Naive thymus-derived CD4-positive, alpha-beta T cell (primary cell): ENCODE measurements at regions of chr7 and their contacts with region 1.

Region 1: DNA sequence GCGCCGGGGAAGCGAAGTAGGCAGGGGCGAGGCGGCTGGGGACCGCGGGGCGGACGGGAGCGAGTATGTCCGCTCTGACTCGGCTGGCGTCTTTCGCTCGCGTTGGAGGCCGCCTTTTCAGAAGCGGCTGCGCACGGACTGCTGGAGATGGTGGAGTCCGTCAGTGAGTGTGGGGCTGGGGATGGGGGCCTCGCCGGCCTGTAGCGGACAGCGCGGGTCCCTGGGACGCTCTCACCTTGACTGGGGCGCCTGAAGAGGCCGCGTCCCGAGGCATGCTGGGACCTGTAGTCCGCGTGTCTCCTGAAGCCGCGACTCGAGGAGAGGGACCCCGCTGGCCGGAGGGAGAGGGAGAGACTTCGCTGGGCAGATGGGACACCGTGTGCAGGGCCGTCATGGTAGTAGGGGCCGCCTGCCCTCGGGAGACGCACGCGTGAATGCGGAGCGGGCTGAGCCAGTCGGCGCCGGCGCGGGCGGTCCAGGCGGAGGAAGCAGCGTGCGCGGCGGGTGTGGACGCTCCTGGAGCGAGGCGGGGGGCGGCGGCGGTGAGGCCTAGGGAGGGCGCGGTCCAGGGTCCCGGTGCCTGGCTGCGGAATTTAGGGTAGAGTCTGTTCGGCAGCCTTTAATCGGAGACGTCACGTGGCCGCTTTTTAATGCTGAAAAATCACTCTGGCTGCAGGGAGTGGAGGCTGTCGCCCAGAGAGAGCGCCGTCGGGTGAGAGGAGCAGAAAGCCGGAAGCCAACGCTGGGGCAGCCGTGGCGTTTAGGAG is at the start of gene NDUFB2:
- DNase-seq: peak; percentile 72 to 92 (median 90)
- ATAC-seq: peak; percentile 92
- H3K4me3 ChIP-seq: peak within 1 kb of the TSS; percentile 99
- H3K4me3 Mint-ChIP-seq: peak within 1 kb of the TSS; percentile 87 to 100 (median 98)
- H3K27ac ChIP-seq: peak within 1 kb of the TSS; percentile 88
- H3K27ac Mint-ChIP-seq: peak within 1 kb of the TSS; percentile 92 to 99 (median 98)
- H3K4me1 ChIP-seq: peaks cover 12 to 16% of the 10 kb centered on the region in 2 donors
- H3K4me1 Mint-ChIP-seq: peaks cover 18 to 50% (median 40%) of the 10 kb centered on the region in 7 donors
- H3K27me3 ChIP-seq: no peaks in the 10 kb centered on the region
- H3K27me3 Mint-ChIP-seq: no peaks in the 10 kb centered on the region
- total RNA-seq, gene NDUFB2: 88.3 to 184 (median 94.0) TPM

Region 2: DNA sequence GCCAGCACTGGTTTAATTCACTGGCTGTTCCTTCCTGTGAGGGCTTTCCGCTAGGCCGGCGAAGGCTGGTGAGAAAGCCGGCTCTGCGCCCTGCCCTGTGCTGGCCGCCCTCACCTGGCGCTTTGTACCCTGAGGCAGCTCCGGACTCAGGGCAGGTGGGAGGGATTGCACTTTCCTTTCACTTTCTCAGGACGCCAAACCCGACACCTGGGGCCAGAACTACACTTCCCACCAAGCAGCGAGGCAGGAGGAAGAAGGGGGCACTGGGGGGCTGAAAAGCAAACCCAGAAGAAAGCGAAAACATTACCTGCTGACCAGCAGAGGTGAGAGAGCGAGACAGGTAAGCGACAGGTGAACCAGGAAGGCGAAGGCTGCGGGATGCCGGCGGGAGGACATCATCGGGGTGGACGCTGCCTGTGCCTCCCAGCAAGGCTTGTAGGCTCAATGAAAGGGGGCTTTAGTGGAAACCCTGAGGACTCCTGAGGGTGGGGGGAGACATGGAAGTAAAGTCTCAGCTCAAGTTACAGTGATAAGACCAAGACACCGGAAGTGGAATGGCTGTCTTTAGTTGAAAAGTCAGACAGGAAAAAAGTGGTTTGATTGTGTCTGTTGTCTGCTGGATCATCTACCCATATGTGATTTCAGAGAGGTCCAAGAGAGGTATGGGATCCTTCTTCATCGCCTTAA is 292.8 kb before region 1 on chr7 and contains the start of gene RAB19:
- CTCF ChIA-PET with region 1: no interaction called
- POLR2A ChIA-PET with region 1: no interaction called
- intact Hi-C with region 1: loop called in 1 of 2 experiments (anchors 10 kb)
- DNase-seq: peak; percentile 7 to 67 (median 56)
- ATAC-seq: peak; percentile 87
- H3K4me3 ChIP-seq: peak within 1 kb of the TSS; percentile 82
- H3K4me3 Mint-ChIP-seq: peak within 1 kb of the TSS; percentile 92 to 99 (median 97)
- H3K27ac ChIP-seq: peak within 1 kb of the TSS; percentile 87
- H3K27ac Mint-ChIP-seq: peak within 1 kb of the TSS; percentile 91 to 99 (median 96)
- H3K4me1 ChIP-seq: peaks cover 8 to 11% of the 10 kb centered on the region in 2 donors
- H3K4me1 Mint-ChIP-seq: peaks cover 13 to 42% (median 29%) of the 10 kb centered on the region in 7 donors
- H3K27me3 ChIP-seq: no peaks in the 10 kb centered on the region
- H3K27me3 Mint-ChIP-seq: peaks cover 0 to 3% (median 0%) of the 10 kb centered on the region in 5 donors
- total RNA-seq, gene RAB19: 1.8 to 13.3 (median 3.3) TPM

Region 3: GRCh38 chr7:140661121-140661520 is 35.7 kb before region 1 on chr7:
- CTCF ChIA-PET with region 1: no interaction called
- POLR2A ChIA-PET with region 1: no interaction called
- intact Hi-C with region 1: loop called in 1 of 2 experiments (anchors 5 kb)
- DNase-seq: no peak
- ATAC-seq: no peak
- H3K4me3 ChIP-seq: no peak overlapping the region
- H3K4me3 Mint-ChIP-seq: no peak overlapping the region
- H3K27ac ChIP-seq: no peak overlapping the region
- H3K27ac Mint-ChIP-seq: no peak overlapping the region
- H3K4me1 ChIP-seq: peaks cover 0 to 6% of the 10 kb centered on the region in 2 donors
- H3K4me1 Mint-ChIP-seq: peaks cover 0 to 12% (median 11%) of the 10 kb centered on the region in 7 donors
- H3K27me3 ChIP-seq: no peaks in the 10 kb centered on the region
- H3K27me3 Mint-ChIP-seq: peaks cover under 1 to 58% (median 5%) of the 10 kb centered on the region in 5 donors

Region 4: GRCh38 chr7:140673063-140673773 is 23.6 kb before region 1 on chr7:
- CTCF ChIA-PET with region 1: no interaction called
- POLR2A ChIA-PET with region 1: interaction called, 26 read pairs
- intact Hi-C with region 1: loop called (anchors 1 kb)
- DNase-seq: peak; percentile 56 to 78 (median 75)
- ATAC-seq: peak; percentile 82
- H3K4me3 ChIP-seq: peak overlapping the region; percentile 82
- H3K4me3 Mint-ChIP-seq: peak overlapping the region; percentile 81 to 94 (median 89)
- H3K27ac ChIP-seq: peak overlapping the region; percentile 91
- H3K27ac Mint-ChIP-seq: peak overlapping the region; percentile 68 to 97 (median 88)
- H3K4me1 ChIP-seq: peaks cover 11 to 14% of the 10 kb centered on the region in 2 donors
- H3K4me1 Mint-ChIP-seq: peaks cover 16 to 42% (median 37%) of the 10 kb centered on the region in 7 donors
- H3K27me3 ChIP-seq: no peaks in the 10 kb centered on the region
- H3K27me3 Mint-ChIP-seq: peaks cover 0 to 7% (median 0%) of the 10 kb centered on the region in 5 donors

Region 5: GRCh38 chr7:140726281-140726680 is 29.4 kb after region 1 on chr7:
- CTCF ChIA-PET with region 1: interaction called, 4 read pairs
- POLR2A ChIA-PET with region 1: interaction called, 21 read pairs
- intact Hi-C with region 1: loop called in 1 of 2 experiments (anchors 1 kb)
- DNase-seq: peak in 4 of 9 donors; percentile 11 to 31 (median 26)
- ATAC-seq: no peak
- H3K4me3 ChIP-seq: no peak overlapping the region
- H3K4me3 Mint-ChIP-seq: no peak overlapping the region
- H3K27ac ChIP-seq: no peak overlapping the region
- H3K27ac Mint-ChIP-seq: peak overlapping the region in 7 of 9 donors; percentile 36 to 76 (median 53)
- H3K4me1 ChIP-seq: peaks cover 0 to 18% of the 10 kb centered on the region in 2 donors
- H3K4me1 Mint-ChIP-seq: peaks cover 9 to 39% (median 29%) of the 10 kb centered on the region in 7 donors
- H3K27me3 ChIP-seq: no peaks in the 10 kb centered on the region
- H3K27me3 Mint-ChIP-seq: no peaks in the 10 kb centered on the region

Region 6: DNA sequence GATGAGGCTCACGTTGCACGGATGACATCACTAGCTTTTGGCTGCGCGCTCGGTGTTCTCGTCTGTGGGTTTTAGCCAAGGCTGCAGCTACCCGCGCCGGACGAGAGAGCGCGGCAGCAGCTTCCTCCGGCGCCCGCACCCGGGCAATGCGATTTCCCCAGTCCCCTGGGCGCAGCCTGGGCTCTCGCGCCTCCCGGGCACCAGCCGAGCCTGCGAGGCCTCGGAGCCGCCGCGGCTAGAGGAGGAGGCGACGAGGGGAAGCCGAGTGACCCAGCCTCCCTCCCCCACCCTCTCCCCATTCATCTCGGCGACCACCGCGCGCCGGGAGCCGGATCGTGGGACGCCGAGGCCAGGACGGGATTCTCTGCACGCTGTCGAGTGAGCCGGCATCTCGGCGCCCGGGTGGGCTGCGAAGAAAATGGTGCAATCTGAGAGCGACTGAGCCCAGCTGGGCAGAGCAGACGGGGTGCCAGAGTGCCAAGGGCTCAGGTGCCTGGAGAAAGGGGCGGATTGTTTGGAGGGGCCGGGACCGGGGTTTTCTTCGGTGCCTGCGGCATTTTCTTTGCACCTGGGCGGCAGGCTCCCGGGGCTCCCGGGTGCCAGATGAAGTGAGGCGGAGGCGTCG is 375.8 kb after region 1 on chr7:
- CTCF ChIA-PET with region 1: no interaction called
- POLR2A ChIA-PET with region 1: no interaction called
- intact Hi-C with region 1: loop called in 1 of 2 experiments (anchors 10 kb)
- DNase-seq: peak in 5 of 9 donors; percentile 2 to 39 (median 5)
- ATAC-seq: peak; percentile 45
- H3K4me3 ChIP-seq: peak overlapping the region; percentile 42
- H3K4me3 Mint-ChIP-seq: peak overlapping the region; percentile 74 to 92 (median 86)
- H3K27ac ChIP-seq: no peak overlapping the region
- H3K27ac Mint-ChIP-seq: no peak overlapping the region
- H3K4me1 ChIP-seq: peaks cover 5 to 6% of the 10 kb centered on the region in 2 donors
- H3K4me1 Mint-ChIP-seq: peaks cover 17 to 30% (median 28%) of the 10 kb centered on the region in 7 donors
- H3K27me3 ChIP-seq: peaks cover 4 to 31% of the 10 kb centered on the region in 2 donors
- H3K27me3 Mint-ChIP-seq: peaks cover 42 to 49% (median 48%) of the 10 kb centered on the region in 5 donors

Region 7: DNA sequence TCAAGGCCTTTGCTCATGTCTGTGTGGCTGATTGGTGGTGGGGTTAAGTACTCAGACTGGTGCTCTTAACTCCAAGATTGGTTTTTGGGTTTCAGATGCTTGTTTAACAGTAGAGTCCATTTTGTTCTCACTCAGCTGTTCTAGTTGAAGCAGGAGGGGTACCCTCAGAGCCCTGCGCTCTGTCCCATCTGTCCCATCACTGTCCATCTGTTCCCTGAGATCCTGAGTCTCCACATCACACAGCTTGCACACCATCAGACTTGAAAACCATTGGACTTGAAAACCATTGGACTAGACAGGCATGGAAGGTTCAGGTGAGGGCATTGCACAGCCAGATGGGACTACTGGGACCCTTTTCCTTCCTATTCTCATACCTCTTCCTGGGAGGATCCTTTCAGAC is 416.3 kb after region 1 on chr7:
- CTCF ChIA-PET with region 1: no interaction called
- POLR2A ChIA-PET with region 1: no interaction called
- intact Hi-C with region 1: no loop called
- DNase-seq: no peak
- ATAC-seq: no peak
- H3K4me3 ChIP-seq: no peak overlapping the region
- H3K4me3 Mint-ChIP-seq: no peak overlapping the region
- H3K27ac ChIP-seq: no peak overlapping the region
- H3K27ac Mint-ChIP-seq: no peak overlapping the region
- H3K4me1 ChIP-seq: no peaks in the 10 kb centered on the region
- H3K4me1 Mint-ChIP-seq: no peaks in the 10 kb centered on the region
- H3K27me3 ChIP-seq: no peaks in the 10 kb centered on the region
- H3K27me3 Mint-ChIP-seq: peaks cover 3 to 10% (median 6%) of the 10 kb centered on the region in 5 donors